Activated CD4-positive, alpha-beta T cell treated with anti-CD3 and anti-CD28 coated beads for 36 hours (primary cell): ENCODE measurements at regions of chr2 and their contacts with region 1.

Region 1: DNA sequence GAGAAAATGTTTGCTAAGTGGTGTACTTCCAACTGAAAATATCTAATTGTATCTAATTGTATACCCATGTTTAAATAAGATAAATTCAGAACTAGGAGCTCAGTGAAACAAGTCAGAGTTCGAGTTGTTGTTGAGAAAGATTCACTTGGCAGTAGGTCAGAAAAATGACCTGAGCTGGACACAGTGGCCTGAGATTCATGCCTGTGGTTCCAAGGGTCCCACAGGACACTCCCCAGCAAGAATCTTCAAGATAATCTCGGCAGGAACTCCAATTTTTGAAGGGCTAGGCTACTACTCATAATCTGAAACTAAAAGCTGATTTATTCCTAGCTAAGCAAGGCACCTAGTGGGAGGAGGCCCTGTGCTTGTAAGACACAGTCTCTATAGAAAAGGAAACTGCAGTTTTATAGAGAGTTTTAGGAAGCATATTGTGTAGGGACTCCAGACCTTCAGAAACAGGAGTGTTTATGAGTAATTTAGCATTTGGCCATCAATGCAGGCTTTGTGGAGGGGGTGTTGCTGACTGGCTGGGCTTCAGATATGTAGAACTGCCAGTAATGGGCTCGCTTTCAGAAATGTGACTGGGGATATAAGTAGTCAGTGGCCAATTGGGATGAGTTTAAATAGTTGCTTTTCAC is 43.2 kb downstream of the SP140 start:
- DNase-seq: peak; percentile 41
- ATAC-seq: peak; percentile 75
- H3K4me3 Mint-ChIP-seq: peak overlapping the region; percentile 11
- H3K27ac Mint-ChIP-seq: peak overlapping the region; percentile 74
- H3K4me1 Mint-ChIP-seq: peaks cover 43% of the 10 kb centered on the region
- H3K27me3 Mint-ChIP-seq: no peaks in the 10 kb centered on the region

Region 2: DNA sequence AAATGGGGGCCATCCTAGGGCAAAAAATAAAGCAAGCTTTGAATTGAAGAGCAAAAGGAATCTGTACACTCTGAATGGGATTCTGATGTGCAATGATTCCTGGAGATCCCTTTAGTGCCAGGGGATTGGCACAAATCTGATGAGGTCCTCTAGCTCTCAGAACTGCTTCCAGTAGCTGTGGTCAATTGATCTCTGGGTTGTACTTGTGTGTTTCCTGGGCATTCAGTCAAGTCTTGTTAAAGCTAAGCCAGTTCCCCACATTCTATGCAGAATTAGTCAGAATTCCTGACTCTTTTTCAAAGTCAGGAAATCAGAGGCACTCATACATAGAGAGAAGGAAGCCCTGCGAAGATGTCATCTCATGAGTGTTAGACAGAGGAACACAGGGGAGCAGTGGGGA is 715.6 kb before region 1 on chr2:
- CTCF ChIA-PET with region 1: no interaction called
- POLR2A ChIA-PET with region 1: no interaction called
- intact Hi-C with region 1: no loop called
- DNase-seq: no peak
- ATAC-seq: no peak
- H3K4me3 Mint-ChIP-seq: no peak overlapping the region
- H3K27ac Mint-ChIP-seq: no peak overlapping the region
- H3K4me1 Mint-ChIP-seq: no peaks in the 10 kb centered on the region
- H3K27me3 Mint-ChIP-seq: peaks cover 10% of the 10 kb centered on the region

Region 3: DNA sequence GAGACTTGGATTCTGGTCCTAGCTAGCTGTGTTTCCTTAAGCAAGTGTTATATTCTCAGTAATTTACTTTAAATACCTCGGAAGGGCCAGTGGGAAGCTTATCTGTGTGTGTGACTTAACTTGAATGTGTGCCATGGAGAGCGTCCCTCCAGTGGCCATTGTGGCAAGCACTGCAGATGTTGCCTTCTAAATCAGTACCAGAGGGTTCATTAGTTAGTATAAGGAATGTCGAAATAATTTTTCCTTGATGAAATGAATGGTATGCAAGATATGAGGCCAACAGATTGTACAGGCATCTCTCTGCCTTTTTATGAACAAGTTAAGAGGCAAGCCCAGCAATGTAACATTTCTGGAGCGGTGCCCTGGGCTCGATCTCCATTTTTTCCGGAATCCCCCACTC is 294.5 kb before region 1 on chr2:
- CTCF ChIA-PET with region 1: no interaction called
- POLR2A ChIA-PET with region 1: no interaction called
- intact Hi-C with region 1: no loop called
- DNase-seq: no peak
- ATAC-seq: no peak
- H3K4me3 Mint-ChIP-seq: no peak overlapping the region
- H3K27ac Mint-ChIP-seq: no peak overlapping the region
- H3K4me1 Mint-ChIP-seq: no peaks in the 10 kb centered on the region
- H3K27me3 Mint-ChIP-seq: no peaks in the 10 kb centered on the region

Region 4: DNA sequence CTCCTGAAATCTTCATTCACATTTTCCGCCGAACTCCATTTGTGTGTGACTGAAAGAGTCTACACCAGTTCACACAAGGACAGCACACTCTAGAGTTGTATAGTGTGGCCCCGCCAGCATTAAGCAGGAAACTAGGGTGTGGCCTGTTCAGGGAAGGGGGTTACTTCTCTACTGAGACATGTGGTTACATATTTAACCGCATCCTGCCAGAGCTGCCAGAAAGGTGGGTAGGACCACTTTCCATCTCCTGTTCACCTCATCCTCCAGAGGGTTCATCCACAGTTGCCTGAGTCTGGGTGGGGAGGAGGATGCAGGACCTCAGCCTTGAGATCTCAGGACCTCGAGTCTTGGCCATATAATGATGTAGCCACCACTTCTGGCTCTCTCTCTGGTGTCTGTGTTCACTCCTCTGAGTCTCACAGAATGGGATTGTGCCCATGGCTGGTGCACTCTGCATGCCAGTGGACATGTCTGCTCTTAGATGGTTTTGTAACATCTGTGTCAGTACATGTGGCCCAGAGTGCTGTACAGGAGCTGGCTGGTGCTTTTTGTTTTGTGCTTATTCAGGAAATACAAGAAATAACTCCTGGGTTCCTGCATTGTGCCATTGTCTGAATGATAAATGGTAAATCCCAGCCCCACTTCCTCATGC is 50.6 kb after region 1 on chr2:
- CTCF ChIA-PET with region 1: no interaction called
- POLR2A ChIA-PET with region 1: no interaction called
- intact Hi-C with region 1: loop called in 1 of 2 experiments (anchors 1 kb)
- DNase-seq: peak; percentile 80
- ATAC-seq: peak; percentile 96
- H3K4me3 Mint-ChIP-seq: peak overlapping the region; percentile 23
- H3K27ac Mint-ChIP-seq: peak overlapping the region; percentile 99
- H3K4me1 Mint-ChIP-seq: peaks cover 58% of the 10 kb centered on the region
- H3K27me3 Mint-ChIP-seq: no peaks in the 10 kb centered on the region